Dorsolateral prefrontal cortex (tissue), 120 donors: ENCODE measurements at regions of chr11 and their contacts with region 1.

Region 1: GRCh38 chr11:129922674-129923073 is 27.3 kb upstream of the NFRKB start:
- DNase-seq: no peak
- H3K4me3 ChIP-seq: no peak overlapping the region
- H3K27ac ChIP-seq: no peak overlapping the region
- H3K27me3 ChIP-seq: no peaks in the 10 kb centered on the region
- CTCF ChIP-seq: no peak

Region 2: GRCh38 chr11:130002846-130003716 is 80.4 kb after region 1 on chr11:
- intact Hi-C with region 1: loop called in 1 of 2 experiments (anchors 5 kb)
- DNase-seq: peak; percentile 86 to 97 (median 94)
- H3K4me3 ChIP-seq: peak overlapping the region; percentile 61 to 97 (median 82)
- H3K27ac ChIP-seq: peak overlapping the region; percentile 97 to 100 (median 100)
- H3K27me3 ChIP-seq: no peaks in the 10 kb centered on the region
- CTCF ChIP-seq: peak in 17 of 56 donors; percentile 0 to 29 (median 14)

Region 3: GRCh38 chr11:130131961-130132850 is 209.5 kb after region 1 on chr11:
- intact Hi-C with region 1: loop called (anchors 2 to 5 kb)
- DNase-seq: no peak
- H3K4me3 ChIP-seq: no peak overlapping the region
- H3K27ac ChIP-seq: no peak overlapping the region
- H3K27me3 ChIP-seq: no peaks in the 10 kb centered on the region
- CTCF ChIP-seq: peak in 55 of 56 donors; percentile 34 to 79 (median 60)

Region 4: GRCh38 chr11:130145975-130146776 is 223.5 kb after region 1 on chr11:
- intact Hi-C with region 1: loop called in 1 of 2 experiments (anchors 5 kb)
- DNase-seq: no peak
- H3K4me3 ChIP-seq: peak overlapping the region in 1 of 59 donors; percentile 6
- H3K27ac ChIP-seq: peak overlapping the region in 52 of 59 donors; percentile 8 to 81 (median 60)
- H3K27me3 ChIP-seq: no peaks in the 10 kb centered on the region
- CTCF ChIP-seq: peak in 25 of 56 donors; percentile 10 to 50 (median 23)

Region 5: DNA sequence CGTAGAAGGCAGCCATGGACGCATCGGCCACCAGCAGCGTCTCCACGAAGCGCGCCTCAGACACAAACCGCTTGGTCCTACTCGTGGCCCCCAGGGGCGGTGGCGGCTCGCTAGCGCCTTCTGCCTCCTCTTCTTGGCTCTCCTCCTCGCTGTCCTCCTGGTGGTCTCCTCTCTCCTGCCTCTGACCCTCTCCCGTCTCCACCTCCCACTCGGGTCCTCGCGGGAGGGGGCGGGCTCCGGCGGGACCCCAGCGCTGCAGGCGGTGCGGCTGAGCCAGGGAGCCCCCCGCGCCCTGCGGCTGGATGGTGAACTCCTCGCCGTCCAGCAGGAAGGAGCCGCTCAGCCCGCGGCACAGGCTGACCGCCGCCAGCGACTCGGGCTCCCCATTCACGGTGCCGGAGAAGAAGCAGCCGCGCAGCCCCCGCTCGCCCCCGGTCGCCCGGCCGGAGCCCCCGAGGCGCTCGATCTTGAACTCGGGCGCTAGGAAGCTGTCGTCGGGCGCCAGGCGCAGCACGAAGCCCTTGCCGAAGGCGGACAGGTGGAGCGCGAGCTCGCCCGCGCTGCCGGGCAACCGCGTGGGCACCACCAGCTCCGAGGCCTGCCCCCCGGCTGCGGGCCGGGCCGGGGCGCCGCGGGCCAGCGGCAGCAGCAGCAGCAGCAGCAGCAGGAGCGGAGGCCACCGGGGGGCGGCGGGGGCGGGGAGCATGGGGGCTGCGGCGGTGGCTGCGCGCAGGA is 505.1 kb after region 1 on chr11:
- intact Hi-C with region 1: loop called in 1 of 2 experiments (anchors 10 kb)
- DNase-seq: peak in 8 of 10 donors; percentile 55 to 80 (median 65)
- H3K4me3 ChIP-seq: peak overlapping the region; percentile 46 to 82 (median 66)
- H3K27ac ChIP-seq: peak overlapping the region in 53 of 59 donors; percentile 12 to 91 (median 75)
- H3K27me3 ChIP-seq: peaks cover 0 to 14% (median 0%) of the 10 kb centered on the region in 45 donors
- CTCF ChIP-seq: peak in 53 of 56 donors; percentile 13 to 69 (median 49)